Activated CD4-positive, alpha-beta T cell treated with anti-CD3 and anti-CD28 coated beads, Interleukin-2, amount 10 ng/mL, durations not matched to agents 7 days and 5 days (primary cell): ENCODE measurements at regions of chr10 and their contacts with region 1.

Region 1: DNA sequence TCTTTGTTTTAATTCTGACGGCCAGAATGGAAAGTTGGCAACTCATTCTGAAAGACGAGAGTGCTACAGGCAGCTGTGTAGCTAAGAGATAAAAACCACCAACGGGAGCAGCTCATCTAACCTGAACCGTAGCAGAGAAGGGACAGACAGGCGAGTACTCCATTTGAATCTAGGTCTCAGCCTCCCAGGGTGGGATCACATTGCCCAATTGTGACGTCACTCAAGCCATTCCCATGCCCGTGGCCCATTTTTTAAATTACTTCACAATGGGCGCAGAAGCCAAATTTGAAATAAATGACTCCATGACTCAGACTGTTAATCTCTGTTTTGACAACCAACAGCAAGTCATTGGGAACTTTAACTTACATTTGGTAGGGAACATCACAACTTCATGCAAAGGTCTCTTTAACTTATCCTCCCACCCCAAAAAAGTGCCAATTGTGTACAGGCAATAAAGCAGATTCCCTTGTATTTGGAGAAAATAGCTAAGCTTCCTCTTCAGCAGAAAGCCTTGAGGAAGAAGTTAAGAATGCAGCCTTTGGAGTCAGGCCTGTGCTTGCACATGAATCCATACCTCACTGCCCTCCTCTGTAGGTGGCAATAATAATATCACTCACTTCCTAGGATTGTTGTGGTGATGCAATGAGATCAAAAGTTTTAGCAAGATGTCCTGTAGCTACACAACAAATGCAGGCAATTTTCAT is 93.2 kb upstream of the KIF5B start:
- DNase-seq: peak; percentile 18
- H3K4me3 Mint-ChIP-seq: no peak overlapping the region
- H3K27ac Mint-ChIP-seq: peak overlapping the region; percentile 63
- H3K4me1 Mint-ChIP-seq: peaks cover 41% of the 10 kb centered on the region
- H3K27me3 Mint-ChIP-seq: no peaks in the 10 kb centered on the region

Region 2: DNA sequence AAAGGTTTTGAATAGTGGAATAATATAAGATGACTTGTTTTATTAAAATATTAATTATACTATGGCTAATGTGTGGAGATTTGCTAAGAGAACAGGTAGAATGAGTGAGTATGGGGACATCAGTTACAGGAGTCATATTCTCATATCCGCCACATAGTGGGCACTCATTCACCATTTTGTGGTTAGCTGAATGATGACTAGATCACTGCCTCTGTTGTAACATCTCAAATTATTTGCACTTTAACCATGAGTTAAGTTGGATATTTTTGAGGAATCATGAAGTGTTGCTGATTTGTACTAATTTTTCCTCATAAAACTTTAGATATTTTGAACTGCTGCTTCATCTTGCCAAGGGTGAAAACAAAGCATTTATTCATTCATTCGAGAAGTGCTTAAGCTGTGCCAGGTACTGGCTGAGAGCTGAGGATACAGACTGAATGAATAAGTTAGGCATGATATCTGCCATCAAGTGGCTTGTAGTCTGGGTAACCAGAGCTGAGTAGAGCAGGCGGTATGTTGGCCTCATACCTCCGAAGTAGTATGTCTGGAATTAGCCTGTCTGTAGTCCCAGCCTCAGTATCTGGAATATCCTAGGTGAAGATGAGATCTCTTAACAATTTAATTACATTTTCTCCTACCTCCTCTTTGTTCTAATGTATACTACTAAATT is 729.9 kb before region 1 on chr10:
- CTCF ChIA-PET with region 1: no interaction called
- POLR2A ChIA-PET with region 1: interaction called, 12 read pairs
- DNase-seq: no peak
- H3K4me3 Mint-ChIP-seq: no peak overlapping the region
- H3K27ac Mint-ChIP-seq: no peak overlapping the region
- H3K4me1 Mint-ChIP-seq: no peaks in the 10 kb centered on the region
- H3K27me3 Mint-ChIP-seq: no peaks in the 10 kb centered on the region

Region 3: GRCh38 chr10:31836569-31837406 is 312.6 kb before region 1 on chr10:
- CTCF ChIA-PET with region 1: no interaction called
- POLR2A ChIA-PET with region 1: no interaction called
- DNase-seq: peak; percentile 10
- H3K4me3 Mint-ChIP-seq: no peak overlapping the region
- H3K27ac Mint-ChIP-seq: no peak overlapping the region
- H3K4me1 Mint-ChIP-seq: peaks cover 5% of the 10 kb centered on the region
- H3K27me3 Mint-ChIP-seq: no peaks in the 10 kb centered on the region